Psoas muscle (tissue), 8 donors: ENCODE measurements at regions of chr16 and their contacts with region 1.

Region 1: GRCh38 chr16:68093816-68094613 is 8.8 kb downstream of the NFATC3 start:
- DNase-seq: no peak
- ATAC-seq: peak in 3 of 4 donors; percentile 51 to 69 (median 56)
- H3K4me3 ChIP-seq: peak overlapping the region; percentile 41
- H3K27ac ChIP-seq: peak overlapping the region; percentile 90
- H3K4me1 ChIP-seq: peaks cover 84% of the 10 kb centered on the region
- H3K27me3 ChIP-seq: no peaks in the 10 kb centered on the region
- CTCF ChIP-seq: peak; percentile 37

Region 2: GRCh38 chr16:68040507-68041288 is 53.3 kb before region 1 on chr16:
- intact Hi-C with region 1: no loop called
- DNase-seq: peak; percentile 80 to 91
- ATAC-seq: peak; percentile 92 to 95 (median 94)
- H3K4me3 ChIP-seq: no peak overlapping the region
- H3K27ac ChIP-seq: no peak overlapping the region
- H3K4me1 ChIP-seq: peaks cover 4% of the 10 kb centered on the region
- H3K27me3 ChIP-seq: no peaks in the 10 kb centered on the region
- CTCF ChIP-seq: peak; percentile 80

Region 3: DNA sequence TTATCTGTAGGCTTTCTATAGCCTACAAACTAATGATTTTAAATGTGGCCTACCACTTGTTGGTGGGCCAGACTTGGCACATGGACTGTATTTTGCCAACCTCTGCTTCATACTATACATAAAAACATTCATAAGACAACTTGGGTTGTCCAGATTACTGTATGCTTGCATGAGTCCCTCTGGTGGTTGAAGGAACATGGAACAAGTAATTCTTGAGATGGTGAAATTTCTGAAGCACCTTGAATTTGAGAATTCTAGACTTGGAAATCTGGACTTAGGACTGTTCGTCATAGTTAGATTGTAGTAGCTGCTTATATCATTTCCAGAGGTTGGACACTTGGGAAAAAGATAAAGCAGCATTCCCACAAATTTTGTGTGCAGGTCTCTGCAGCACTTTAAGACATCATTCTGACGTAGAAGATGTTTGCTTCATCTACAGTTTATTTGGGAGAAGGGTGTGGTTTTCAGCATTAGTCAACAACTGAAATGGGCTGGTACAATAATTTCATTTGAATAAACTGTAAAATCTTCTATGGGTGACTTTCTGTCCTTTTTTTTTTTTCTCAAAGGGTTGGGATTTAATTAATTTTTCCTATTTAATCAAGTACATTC is 22.3 kb after region 1 on chr16:
- intact Hi-C with region 1: loop called in 1 of 2 experiments (anchors 2 kb)
- DNase-seq: no peak
- ATAC-seq: peak in 2 of 4 donors; percentile 30 to 41
- H3K4me3 ChIP-seq: no peak overlapping the region
- H3K27ac ChIP-seq: peak overlapping the region; percentile 4
- H3K4me1 ChIP-seq: peaks cover 38% of the 10 kb centered on the region
- H3K27me3 ChIP-seq: no peaks in the 10 kb centered on the region
- CTCF ChIP-seq: peak; percentile 50

Region 4: DNA sequence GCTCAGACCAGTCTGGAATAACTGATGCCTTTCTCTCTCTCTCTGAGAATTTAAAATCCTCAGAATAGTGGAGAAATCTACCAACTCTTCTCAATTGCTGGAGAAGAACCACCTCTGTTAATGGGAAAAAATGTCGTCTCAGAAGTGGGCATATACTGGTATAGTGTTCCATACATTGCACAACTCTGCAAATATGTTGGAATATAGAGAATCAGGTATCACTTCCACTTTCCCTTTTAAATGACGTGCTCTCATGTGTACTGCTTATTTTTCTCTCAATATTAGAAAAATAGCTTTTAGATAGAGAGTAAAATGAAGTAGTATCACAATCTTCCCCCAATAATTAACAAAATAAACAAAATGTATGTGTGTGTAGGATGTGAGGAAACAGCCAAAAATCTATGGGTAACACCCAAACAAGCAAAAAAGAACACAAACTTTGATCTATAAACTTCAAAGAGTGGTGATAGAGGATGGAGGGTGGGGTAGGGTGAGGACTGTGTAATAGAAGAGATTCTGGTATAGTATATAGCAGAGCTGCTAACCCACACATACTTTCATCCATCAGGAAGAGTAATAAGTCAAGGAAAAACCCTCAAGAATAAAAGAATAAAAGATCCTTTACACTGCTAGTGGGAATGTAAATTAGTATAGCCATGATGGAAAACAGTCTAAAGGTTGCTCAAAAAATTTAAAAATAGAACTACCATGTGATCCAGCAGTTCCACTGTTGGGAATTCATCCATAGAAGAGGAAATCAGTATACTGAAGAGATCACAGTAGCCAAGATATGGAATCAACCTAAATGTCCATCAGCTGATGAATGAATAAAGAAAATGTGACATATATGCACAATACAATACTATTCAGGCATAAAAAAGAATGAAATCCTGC is 38.0 kb after region 1 on chr16:
- intact Hi-C with region 1: loop called in 1 of 2 experiments (anchors 5 kb)
- DNase-seq: no peak
- ATAC-seq: peak in 2 of 4 donors; percentile 47 to 52
- H3K4me3 ChIP-seq: peak overlapping the region; percentile 9
- H3K27ac ChIP-seq: peak overlapping the region; percentile 78
- H3K4me1 ChIP-seq: peaks cover 66% of the 10 kb centered on the region
- H3K27me3 ChIP-seq: no peaks in the 10 kb centered on the region
- CTCF ChIP-seq: no peak